Naive thymus-derived CD4-positive, alpha-beta T cell (primary cell): ENCODE measurements at regions of chr19 and their contacts with region 1.

Region 1: GRCh38 chr19:44207126-44207803 is 5.1 kb upstream of the ZNF227 start:
- DNase-seq: peak; percentile 25 to 78 (median 70)
- ATAC-seq: peak; percentile 97
- H3K4me3 ChIP-seq: peak overlapping the region; percentile 79
- H3K4me3 Mint-ChIP-seq: peak overlapping the region; percentile 81 to 95 (median 87)
- H3K27ac ChIP-seq: peak overlapping the region; percentile 75
- H3K27ac Mint-ChIP-seq: peak overlapping the region; percentile 79 to 93 (median 84)
- H3K4me1 ChIP-seq: peaks cover 0 to 11% of the 10 kb centered on the region in 2 donors
- H3K4me1 Mint-ChIP-seq: peaks cover 7 to 15% (median 11%) of the 10 kb centered on the region in 7 donors
- H3K27me3 ChIP-seq: no peaks in the 10 kb centered on the region
- H3K27me3 Mint-ChIP-seq: peaks cover 0 to 22% (median 16%) of the 10 kb centered on the region in 5 donors

Region 2: GRCh38 chr19:44141191-44142058 is 65.8 kb before region 1 on chr19 and contains the start of gene ZNF234:
- CTCF ChIA-PET with region 1: no interaction called
- POLR2A ChIA-PET with region 1: interaction called, 3 read pairs
- intact Hi-C with region 1: loop called in 1 of 2 experiments (anchors 1 kb)
- DNase-seq: peak; percentile 29 to 69 (median 56)
- ATAC-seq: peak; percentile 92
- H3K4me3 ChIP-seq: peak within 1 kb of the TSS; percentile 80
- H3K4me3 Mint-ChIP-seq: peak within 1 kb of the TSS; percentile 90 to 97 (median 96)
- H3K27ac ChIP-seq: peak within 1 kb of the TSS; percentile 77
- H3K27ac Mint-ChIP-seq: peak within 1 kb of the TSS; percentile 64 to 94 (median 88)
- H3K4me1 ChIP-seq: peaks cover 0 to 12% of the 10 kb centered on the region in 2 donors
- H3K4me1 Mint-ChIP-seq: peaks cover 14 to 30% (median 25%) of the 10 kb centered on the region in 7 donors
- H3K27me3 ChIP-seq: no peaks in the 10 kb centered on the region
- H3K27me3 Mint-ChIP-seq: no peaks in the 10 kb centered on the region
- total RNA-seq, gene ZNF234: 2.8 to 25.2 (median 13.4) TPM

Region 3: GRCh38 chr19:44430956-44431355 is 223.7 kb after region 1 on chr19:
- CTCF ChIA-PET with region 1: no interaction called
- POLR2A ChIA-PET with region 1: no interaction called
- intact Hi-C with region 1: no loop called
- DNase-seq: no peak
- ATAC-seq: no peak
- H3K4me3 ChIP-seq: no peak overlapping the region
- H3K4me3 Mint-ChIP-seq: no peak overlapping the region
- H3K27ac ChIP-seq: no peak overlapping the region
- H3K27ac Mint-ChIP-seq: no peak overlapping the region
- H3K4me1 ChIP-seq: no peaks in the 10 kb centered on the region
- H3K4me1 Mint-ChIP-seq: no peaks in the 10 kb centered on the region
- H3K27me3 ChIP-seq: no peaks in the 10 kb centered on the region
- H3K27me3 Mint-ChIP-seq: no peaks in the 10 kb centered on the region